Activated CD4-positive, alpha-beta memory T cell treated with anti-CD3 and anti-CD28 coated beads for 36 hours (primary cell): ENCODE measurements at regions of chr7 and their contacts with region 1.

Region 1: GRCh38 chr7:128455551-128456254 is at the start of gene HILPDA:
- DNase-seq: peak; percentile 97
- H3K4me3 Mint-ChIP-seq: peak within 1 kb of the TSS; percentile 96
- H3K27ac Mint-ChIP-seq: peak within 1 kb of the TSS; percentile 95
- H3K4me1 Mint-ChIP-seq: peaks cover 62% of the 10 kb centered on the region
- H3K27me3 Mint-ChIP-seq: peaks cover 5% of the 10 kb centered on the region
- total RNA-seq, gene HILPDA: 48.6 to 48.8 TPM

Region 2: DNA sequence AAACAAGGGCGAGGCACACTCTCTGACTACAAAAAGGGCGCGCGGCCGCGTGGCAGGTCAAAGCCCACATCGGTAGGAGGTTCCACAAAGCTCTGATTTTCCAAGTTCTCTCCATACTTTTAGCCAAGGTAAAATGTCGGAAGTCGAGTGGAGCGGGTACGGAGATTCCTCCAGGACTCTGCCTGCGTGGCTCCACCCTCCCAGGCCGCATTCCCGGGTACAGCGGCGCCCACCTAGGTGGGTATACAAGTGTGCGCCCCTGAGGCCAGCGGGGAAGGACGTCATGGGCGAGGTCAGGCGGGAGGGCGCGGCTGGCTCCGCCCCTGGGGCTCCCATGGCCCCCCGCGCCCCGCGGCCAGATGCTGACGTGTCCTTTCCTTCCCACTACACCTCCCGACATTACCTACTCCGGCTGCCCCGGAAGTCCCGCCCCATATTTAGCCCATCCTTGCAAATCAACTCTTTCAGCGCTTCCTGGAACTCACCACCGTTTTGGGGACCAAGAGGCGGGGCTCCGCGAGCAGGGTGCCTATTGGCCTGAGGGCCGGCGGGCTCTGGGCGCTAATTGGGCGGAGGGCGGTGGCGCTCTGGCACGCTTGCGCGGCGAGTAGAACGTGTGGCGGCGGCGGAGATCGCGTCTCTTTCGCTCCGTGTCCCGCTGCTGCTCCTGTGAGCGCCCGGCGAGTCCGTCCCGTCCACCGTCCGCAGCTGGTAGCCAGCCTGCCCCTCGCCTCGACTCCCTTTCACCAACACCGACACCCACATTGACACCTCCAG is 804.0 kb before region 1 on chr7 and contains the start of gene SND1:
- CTCF ChIA-PET with region 1: no interaction called
- POLR2A ChIA-PET with region 1: no interaction called
- intact Hi-C with region 1: loop called (anchors 5 kb)
- DNase-seq: peak; percentile 100
- H3K4me3 Mint-ChIP-seq: peak within 1 kb of the TSS; percentile 98
- H3K27ac Mint-ChIP-seq: peak within 1 kb of the TSS; percentile 94
- H3K4me1 Mint-ChIP-seq: peaks cover 31% of the 10 kb centered on the region
- H3K27me3 Mint-ChIP-seq: no peaks in the 10 kb centered on the region
- total RNA-seq, gene SND1: 208 to 235 TPM

Region 3: DNA sequence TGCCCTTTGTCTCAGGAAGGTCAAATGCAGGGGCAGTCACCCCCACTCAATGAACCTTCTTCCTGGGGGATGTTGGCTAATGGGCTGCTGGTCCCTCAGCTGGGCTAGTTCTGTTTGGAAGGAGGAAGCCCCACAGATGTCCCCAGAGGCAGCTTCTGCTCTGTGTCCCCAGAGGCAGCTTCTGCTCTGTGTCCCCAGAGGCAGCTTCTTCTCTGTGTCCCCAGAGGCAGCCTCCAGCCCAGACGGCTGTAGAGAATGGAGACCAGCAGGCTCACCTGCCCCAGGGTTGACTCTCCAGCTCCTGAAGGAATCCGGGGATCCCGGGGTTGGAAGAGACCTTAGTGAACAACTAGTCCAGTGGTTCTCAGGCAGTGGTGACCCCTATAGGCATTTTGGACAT is 277.1 kb before region 1 on chr7:
- CTCF ChIA-PET with region 1: no interaction called
- POLR2A ChIA-PET with region 1: no interaction called
- intact Hi-C with region 1: no loop called
- DNase-seq: no peak
- H3K4me3 Mint-ChIP-seq: no peak overlapping the region
- H3K27ac Mint-ChIP-seq: no peak overlapping the region
- H3K4me1 Mint-ChIP-seq: no peaks in the 10 kb centered on the region
- H3K27me3 Mint-ChIP-seq: peaks cover 22% of the 10 kb centered on the region

Region 4: DNA sequence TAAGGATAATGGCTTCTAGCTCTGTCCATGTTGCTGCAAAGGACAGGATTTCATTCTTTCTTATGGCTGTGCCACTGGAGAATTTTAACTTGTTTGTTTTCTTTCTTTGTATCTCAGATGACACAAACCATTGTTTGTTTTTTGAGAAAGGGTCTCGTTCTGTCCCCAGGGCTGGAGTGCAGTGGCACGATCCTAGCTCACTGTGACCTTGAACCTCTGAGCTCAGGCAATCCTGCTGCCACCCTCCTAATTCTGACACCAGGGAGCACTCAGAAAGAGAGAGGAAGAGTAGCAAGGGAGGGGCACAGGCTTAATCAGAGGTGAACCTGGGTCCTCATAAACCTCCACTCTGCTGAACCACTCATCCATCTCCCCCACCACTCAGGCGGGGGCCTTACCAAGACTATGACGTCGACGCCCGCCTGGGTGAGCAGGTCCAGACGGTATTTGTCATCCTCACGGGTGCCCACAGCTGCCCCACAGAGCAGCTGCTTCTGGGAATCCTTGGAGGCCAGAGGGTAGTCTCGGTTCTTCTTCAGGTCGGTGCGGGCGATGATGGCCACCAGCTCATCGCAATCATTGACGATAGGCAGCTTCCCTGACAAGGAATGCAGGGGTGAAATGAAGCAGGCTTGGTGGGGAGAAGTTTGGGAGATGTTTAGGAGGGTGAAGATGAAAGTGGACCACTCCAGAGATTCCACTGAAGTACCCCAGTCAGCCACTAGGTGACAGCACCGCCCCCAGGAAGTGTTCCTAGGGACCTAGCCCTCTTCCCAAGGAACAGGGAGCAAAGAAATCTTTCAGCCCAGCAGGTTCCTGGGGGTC is 57.5 kb before region 1 on chr7:
- CTCF ChIA-PET with region 1: interaction called, 36 read pairs
- POLR2A ChIA-PET with region 1: no interaction called
- intact Hi-C with region 1: loop called (anchors 1 kb)
- DNase-seq: peak; percentile 59
- H3K4me3 Mint-ChIP-seq: no peak overlapping the region
- H3K27ac Mint-ChIP-seq: no peak overlapping the region
- H3K4me1 Mint-ChIP-seq: peaks cover 5% of the 10 kb centered on the region
- H3K27me3 Mint-ChIP-seq: no peaks in the 10 kb centered on the region

Region 5: DNA sequence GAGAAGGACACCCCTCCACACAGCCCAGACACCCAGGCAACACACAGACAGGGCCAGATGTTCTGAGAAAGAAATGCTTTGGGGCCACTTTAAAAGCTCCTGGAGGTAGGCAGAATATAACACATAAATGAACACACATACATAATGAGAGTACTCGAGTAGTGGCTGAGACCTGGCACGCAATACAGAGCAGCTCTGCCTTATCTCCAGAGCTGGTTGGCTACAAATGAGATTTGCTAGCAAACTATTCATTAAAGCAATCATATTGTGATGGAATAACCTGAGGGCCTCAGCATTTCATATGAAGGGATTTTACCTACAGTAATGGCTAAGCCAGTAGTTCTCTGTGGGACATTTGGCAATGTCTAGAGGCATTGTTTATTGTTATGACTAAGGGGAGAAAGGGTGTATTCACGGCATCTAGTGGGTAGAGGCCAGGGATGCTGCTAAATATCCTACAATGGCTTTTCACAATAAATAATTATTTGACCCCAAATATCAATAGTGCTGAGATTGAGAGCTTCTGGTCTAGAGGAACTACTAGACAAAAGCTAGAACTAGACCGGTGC is 40.4 kb before region 1 on chr7:
- CTCF ChIA-PET with region 1: interaction called, 33 read pairs
- POLR2A ChIA-PET with region 1: interaction called, 3 read pairs
- intact Hi-C with region 1: loop called (anchors 1 kb)
- DNase-seq: no peak
- H3K4me3 Mint-ChIP-seq: no peak overlapping the region
- H3K27ac Mint-ChIP-seq: no peak overlapping the region
- H3K4me1 Mint-ChIP-seq: peaks cover 4% of the 10 kb centered on the region
- H3K27me3 Mint-ChIP-seq: peaks cover 2% of the 10 kb centered on the region

Region 6: DNA sequence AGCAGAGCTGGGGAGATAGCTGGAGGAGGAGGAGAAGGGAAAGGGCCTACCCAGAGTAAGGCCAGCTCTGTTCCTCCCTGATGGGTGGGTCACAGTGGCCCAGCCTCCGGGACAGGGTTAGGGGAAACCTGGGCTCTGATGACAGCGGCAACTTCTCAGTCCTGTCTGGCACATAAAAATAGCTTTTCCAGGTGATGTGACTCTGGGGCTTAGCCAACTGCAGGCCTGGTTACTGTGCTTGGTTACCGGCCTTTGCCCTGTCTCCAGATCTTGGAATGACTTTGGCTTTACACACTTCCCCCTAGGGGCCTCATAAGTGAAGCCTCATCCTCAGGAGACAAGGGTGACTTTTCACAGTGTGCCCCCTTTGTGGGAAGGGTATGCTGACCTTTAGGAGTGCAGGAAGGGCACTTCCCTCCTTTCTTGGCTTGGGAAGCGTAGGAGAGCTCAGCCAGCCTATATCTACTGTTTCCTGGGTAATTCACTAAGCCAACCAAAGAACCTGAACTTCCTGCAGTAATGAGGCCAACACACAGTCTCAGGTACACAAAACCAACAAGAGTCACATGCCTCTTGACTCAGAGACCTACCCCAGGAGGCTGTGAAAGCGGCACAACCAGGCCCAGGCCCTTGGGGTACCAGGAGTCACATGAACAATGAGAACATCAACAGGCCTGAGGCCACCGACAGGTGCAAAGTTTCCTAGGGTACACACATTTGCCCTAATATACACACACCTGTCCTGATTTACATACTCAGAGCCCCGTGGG is 11.7 kb before region 1 on chr7:
- CTCF ChIA-PET with region 1: interaction called, 20 read pairs
- POLR2A ChIA-PET with region 1: interaction called, 4 read pairs
- intact Hi-C with region 1: no loop called
- DNase-seq: no peak
- H3K4me3 Mint-ChIP-seq: no peak overlapping the region
- H3K27ac Mint-ChIP-seq: no peak overlapping the region
- H3K4me1 Mint-ChIP-seq: peaks cover 7% of the 10 kb centered on the region
- H3K27me3 Mint-ChIP-seq: no peaks in the 10 kb centered on the region